ENCODE measurements at regions of chr17 and their contacts with region 1.

Region 1: GRCh38 chr17:27091043-27091497 is 202.8 kb upstream of the WSB1 start:
- DNase-seq: no peak
- H3K4me3 ChIP-seq: no peak overlapping the region
- H3K27ac ChIP-seq: no peak overlapping the region
- H3K4me1 ChIP-seq: no peaks in the 10 kb centered on the region
- H3K27me3 ChIP-seq: no peaks in the 10 kb centered on the region
- CTCF ChIP-seq: no peak

Region 2: DNA sequence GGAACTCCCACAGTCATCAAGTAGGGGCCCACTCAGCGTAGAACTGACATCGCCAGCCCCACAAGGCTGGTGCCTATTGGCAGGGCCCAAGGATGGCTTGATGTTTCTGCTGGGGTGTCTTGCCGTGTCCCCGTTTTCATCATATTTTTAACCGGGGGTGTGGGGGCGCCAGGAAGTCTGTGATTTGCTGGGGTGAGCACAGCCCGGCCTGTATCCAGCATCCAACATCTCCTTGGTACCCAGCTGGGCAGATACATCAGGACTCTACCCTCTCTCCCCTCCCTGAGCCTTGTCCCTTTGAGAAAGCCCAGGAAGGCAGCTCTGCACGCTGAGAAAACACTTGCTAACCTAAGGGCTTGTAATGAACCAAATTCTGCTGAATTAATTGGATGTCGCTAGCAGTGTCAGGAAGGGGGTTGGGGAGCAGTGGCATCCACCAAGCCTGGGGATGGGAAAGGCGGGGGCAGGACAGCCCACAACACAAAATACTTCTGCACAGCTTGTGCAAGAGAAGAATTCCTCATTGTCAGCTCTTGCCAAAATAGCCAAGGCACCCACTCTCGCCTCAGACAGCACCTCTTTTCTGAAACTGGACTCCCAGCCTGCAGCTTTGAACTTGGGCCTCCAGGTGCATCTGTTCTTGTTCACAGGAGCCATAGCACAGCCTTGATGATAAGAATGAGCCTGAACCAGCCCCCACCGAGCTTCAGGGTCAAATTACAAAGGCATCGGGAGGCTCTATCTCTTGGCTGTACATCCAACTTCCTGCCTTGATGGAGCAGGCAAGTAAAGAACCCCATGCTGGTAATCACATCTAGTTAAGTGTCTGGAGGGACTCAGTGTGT is 865.8 kb after region 1 on chr17:
- CTCF ChIA-PET with region 1: no interaction called
- dilution Hi-C with region 1: no loop called
- in situ Hi-C with region 1: loop called in 1 of 2 experiments (anchors 25 kb)
- intact Hi-C with region 1: no loop called
- DNase-seq: no peak
- H3K4me3 ChIP-seq: no peak overlapping the region
- H3K27ac ChIP-seq: no peak overlapping the region
- H3K4me1 ChIP-seq: peaks cover 11% of the 10 kb centered on the region
- H3K27me3 ChIP-seq: no peaks in the 10 kb centered on the region
- CTCF ChIP-seq: no peak

Measured in mammary epithelial cell (primary cell).